ENCODE measurements at regions of chr5 and their contacts with region 1.

Region 1: DNA sequence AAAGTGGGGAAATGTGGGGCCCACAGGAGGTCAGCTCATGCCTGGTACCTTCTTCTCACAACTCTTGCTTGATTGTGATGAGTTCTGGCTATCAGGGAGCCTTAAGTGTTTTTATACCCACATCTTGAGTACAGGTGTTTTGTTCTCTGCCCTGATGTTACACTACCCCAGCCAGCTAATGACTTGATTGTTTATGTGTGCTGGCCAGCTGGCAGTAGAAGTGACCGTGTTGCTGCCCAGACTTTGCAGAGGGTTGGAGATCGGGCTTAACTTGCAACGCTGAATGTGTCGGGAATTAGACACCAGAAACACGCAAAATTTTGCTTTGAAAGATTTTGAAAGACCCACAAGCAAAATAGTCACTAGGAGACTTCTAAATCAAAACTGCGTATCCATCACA is 16.9 kb upstream of the ZDHHC11B start:
- DNase-seq: no peak
- ATAC-seq: no peak

Region 2: GRCh38 chr5:308672-309271 is 492.7 kb before region 1 on chr5:
- intact Hi-C with region 1: no loop called
- DNase-seq: no peak
- ATAC-seq: no peak

Region 3: DNA sequence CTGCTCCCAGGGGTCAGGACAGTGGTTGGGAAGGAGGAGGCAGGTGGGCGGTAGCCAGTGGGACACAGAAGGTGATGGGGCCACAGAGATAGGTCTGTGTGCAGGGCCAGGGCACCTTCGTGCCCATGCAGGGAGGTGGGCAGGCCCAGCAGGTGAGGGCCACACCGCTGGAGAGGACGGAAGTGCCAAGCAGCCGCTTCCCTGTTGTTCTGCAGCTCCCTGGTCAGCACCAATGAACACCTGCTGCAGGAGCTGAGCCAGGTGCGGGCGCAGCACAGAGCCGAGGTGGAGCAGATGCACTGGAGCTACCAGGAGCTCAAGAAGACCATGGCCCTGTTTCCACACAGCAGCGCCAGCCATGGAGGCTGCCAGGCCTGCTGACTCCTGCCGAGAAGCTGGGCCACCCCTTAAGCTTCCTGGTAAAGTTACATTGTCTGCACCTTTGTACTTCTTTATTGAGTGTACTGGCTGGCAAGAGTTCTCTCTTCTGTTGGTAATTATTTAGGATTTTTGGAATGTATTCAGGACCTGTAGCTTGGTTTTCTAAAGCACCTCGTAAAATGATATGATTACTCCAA is 148.6 kb before region 1 on chr5:
- intact Hi-C with region 1: no loop called
- DNase-seq: no peak
- ATAC-seq: peak; percentile 85

Region 4: GRCh38 chr5:717143-717542 is 84.3 kb before region 1 on chr5:
- intact Hi-C with region 1: loop called in 1 of 2 experiments (anchors 5 kb)
- DNase-seq: no peak
- ATAC-seq: no peak

Measured in left colon (tissue), 2 donors.